ENCODE measurements at regions of chr2 and their contacts with region 1.

Region 1: DNA sequence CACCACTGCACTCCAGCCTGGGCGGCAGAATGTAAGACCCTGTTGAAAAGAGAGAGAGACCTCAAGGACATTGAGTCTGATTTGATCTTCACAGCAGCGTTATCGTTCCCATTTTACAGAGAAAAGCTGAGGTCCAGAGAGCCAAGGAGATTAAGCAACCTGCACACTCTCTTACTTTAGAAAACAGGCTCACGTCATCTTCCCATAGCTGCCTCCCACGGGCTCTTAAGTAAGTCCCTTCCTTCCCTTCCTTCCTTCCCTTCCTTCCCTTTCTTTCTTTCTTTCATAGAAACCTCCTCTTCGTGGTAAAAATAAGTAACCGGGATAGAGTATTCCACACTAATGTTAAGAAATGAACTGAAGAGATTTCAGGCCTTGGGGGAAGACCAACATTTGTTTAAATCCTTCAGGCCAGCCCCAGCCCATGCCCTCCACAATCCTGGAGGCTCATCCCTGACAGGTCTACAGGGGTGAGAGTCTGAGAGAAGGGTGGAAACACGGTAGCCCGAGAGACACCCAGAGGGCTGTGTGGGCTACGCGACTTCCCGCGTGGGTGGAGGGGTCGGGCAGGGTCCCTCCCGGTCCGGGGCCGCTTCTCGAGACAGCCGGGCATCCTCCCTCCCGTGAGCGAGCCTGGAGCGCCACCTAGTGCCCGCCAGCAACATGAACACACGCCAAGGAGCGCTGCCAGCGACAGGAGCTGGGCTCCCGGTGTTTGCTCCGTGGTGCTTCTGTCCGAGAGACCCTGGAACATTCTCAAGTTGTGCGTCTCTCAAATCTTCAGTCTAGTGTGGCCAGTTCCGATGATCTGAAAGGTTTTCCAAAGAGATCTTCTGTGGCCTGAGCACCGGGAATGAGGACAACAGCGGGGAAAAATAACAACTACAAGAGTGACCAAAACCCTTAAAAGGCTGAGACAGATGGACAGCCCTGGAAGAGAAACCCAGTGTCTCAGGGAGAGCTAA is 160.3 kb downstream of the INO80D start:
- DNase-seq: peak; percentile 80
- H3K4me3 Mint-ChIP-seq: peak overlapping the region; percentile 8
- H3K27ac Mint-ChIP-seq: no peak overlapping the region
- H3K4me1 Mint-ChIP-seq: peaks cover 8% of the 10 kb centered on the region
- H3K27me3 Mint-ChIP-seq: peaks cover 39% of the 10 kb centered on the region

Region 2: DNA sequence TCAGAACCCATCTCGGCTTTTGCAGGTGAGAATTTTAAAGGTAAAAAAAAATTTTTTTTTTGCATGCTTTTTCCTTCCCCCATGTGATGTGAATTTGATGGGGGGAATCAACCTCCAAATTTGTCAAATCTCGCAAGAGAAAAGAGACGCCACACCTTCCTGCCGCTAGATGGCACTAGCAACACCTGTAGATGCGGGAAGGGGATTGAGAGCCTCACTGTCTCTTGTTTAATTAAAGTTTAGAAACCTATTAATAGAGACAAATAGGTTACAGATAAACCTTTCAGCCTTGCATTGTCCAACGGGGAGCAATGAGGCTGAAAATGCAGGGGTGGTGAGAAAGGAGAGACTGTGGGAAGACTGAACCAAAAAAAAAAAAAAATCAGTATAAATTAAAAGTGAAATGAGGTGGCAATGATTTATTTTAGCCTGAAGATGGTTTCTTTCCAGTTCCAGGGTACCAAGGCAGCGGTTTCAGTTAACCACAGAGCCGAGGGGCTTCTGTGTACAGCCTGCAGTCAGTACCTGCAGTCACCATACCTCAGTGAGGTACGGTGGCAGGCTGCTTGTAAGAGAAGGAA is 158.8 kb before region 1 on chr2:
- CTCF ChIA-PET with region 1: interaction called, 3 read pairs
- intact Hi-C with region 1: loop called (anchors 2 kb)
- DNase-seq: peak; percentile 80
- H3K4me3 Mint-ChIP-seq: no peak overlapping the region
- H3K27ac Mint-ChIP-seq: no peak overlapping the region
- H3K4me1 Mint-ChIP-seq: peaks cover 12% of the 10 kb centered on the region
- H3K27me3 Mint-ChIP-seq: peaks cover 23% of the 10 kb centered on the region

Region 3: DNA sequence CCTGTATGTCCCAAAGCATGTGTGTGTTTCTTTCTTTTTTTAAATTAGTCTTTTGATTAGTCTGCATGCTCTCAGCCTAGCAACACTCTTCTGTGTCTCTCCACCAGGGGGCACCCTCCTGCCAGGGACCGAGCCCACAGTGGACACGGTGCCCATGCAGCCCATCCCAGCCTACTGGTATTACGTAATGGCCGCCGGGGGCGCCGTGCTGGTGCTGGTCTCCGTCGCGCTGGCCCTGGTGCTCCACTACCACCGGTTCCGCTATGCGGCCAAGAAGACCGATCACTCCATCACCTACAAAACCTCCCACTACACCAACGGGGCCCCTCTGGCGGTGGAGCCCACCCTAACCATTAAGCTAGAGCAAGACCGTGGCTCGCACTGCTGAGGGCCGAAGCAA is 149.5 kb before region 1 on chr2:
- CTCF ChIA-PET with region 1: interaction called, 6 read pairs
- intact Hi-C with region 1: loop called (anchors 1 kb)
- DNase-seq: peak; percentile 58
- H3K4me3 Mint-ChIP-seq: no peak overlapping the region
- H3K27ac Mint-ChIP-seq: no peak overlapping the region
- H3K4me1 Mint-ChIP-seq: peaks cover 7% of the 10 kb centered on the region
- H3K27me3 Mint-ChIP-seq: peaks cover 32% of the 10 kb centered on the region

Region 4: DNA sequence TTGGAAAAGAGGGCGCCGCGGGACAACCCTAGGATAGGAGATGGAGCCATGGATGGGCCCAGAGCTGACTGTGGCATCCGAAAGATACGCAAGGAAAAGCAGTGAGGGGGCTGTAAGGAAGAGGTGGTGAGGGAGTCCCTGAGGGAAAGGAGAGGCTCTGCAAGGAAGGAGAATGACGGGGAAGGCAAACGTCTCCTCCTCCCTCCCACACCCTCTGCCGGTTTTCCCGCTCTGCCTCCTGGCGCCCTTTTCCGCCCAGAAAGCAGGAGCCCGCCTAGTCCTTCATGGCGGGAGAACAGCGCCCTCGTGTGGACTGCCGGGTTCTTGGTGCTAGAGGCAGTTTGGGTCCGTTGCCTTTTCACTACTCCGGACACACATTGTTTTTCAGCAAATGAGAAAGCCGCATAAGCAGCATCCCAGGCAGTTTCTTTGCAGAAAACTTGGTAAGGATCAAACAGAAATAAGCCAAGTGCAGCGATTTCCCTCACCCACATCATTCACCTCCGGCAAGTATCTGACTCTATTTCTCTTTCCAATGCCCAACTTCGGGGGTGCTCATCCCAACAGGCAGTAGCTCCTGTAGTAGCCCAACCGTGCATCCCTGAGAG is 40.1 kb before region 1 on chr2:
- CTCF ChIA-PET with region 1: interaction called, 4 read pairs
- intact Hi-C with region 1: loop called (anchors 5 kb)
- DNase-seq: peak; percentile 86
- H3K4me3 Mint-ChIP-seq: no peak overlapping the region
- H3K27ac Mint-ChIP-seq: no peak overlapping the region
- H3K4me1 Mint-ChIP-seq: no peaks in the 10 kb centered on the region
- H3K27me3 Mint-ChIP-seq: peaks cover 16% of the 10 kb centered on the region

Measured in activated naive CD4-positive, alpha-beta T cell treated with anti-CD3 and anti-CD28 coated beads for 36 hours (primary cell).